ENCODE measurements at regions of chr19 and their contacts with region 1.

Region 1: GRCh38 chr19:39445265-39446111 is at the start of gene SUPT5H:
- DNase-seq: peak; percentile 91 to 99 (median 98)
- ATAC-seq: peak; percentile 94 to 96
- H3K4me3 Mint-ChIP-seq: peak within 1 kb of the TSS; percentile 92 to 100 (median 99)
- H3K27ac Mint-ChIP-seq: peak within 1 kb of the TSS; percentile 96 to 100 (median 99)
- H3K4me1 Mint-ChIP-seq: peaks cover 34 to 68% (median 56%) of the 10 kb centered on the region in 4 donors
- H3K27me3 Mint-ChIP-seq: no peaks in the 10 kb centered on the region
- polyA plus RNA-seq, gene SUPT5H: 79.9 to 115 (median 96.6) TPM

Region 2: GRCh38 chr19:39328046-39328705 is 117.3 kb before region 1 on chr19:
- POLR2A ChIA-PET with region 1: interaction called, 10 read pairs
- DNase-seq: peak; percentile 63 to 88 (median 78)
- ATAC-seq: peak; percentile 59 to 82
- H3K4me3 Mint-ChIP-seq: peak overlapping the region in 9 of 10 donors; percentile 14 to 74 (median 52)
- H3K27ac Mint-ChIP-seq: peak overlapping the region; percentile 37 to 92 (median 82)
- H3K4me1 Mint-ChIP-seq: peaks cover 23 to 63% (median 50%) of the 10 kb centered on the region in 4 donors
- H3K27me3 Mint-ChIP-seq: no peaks in the 10 kb centered on the region

Region 3: DNA sequence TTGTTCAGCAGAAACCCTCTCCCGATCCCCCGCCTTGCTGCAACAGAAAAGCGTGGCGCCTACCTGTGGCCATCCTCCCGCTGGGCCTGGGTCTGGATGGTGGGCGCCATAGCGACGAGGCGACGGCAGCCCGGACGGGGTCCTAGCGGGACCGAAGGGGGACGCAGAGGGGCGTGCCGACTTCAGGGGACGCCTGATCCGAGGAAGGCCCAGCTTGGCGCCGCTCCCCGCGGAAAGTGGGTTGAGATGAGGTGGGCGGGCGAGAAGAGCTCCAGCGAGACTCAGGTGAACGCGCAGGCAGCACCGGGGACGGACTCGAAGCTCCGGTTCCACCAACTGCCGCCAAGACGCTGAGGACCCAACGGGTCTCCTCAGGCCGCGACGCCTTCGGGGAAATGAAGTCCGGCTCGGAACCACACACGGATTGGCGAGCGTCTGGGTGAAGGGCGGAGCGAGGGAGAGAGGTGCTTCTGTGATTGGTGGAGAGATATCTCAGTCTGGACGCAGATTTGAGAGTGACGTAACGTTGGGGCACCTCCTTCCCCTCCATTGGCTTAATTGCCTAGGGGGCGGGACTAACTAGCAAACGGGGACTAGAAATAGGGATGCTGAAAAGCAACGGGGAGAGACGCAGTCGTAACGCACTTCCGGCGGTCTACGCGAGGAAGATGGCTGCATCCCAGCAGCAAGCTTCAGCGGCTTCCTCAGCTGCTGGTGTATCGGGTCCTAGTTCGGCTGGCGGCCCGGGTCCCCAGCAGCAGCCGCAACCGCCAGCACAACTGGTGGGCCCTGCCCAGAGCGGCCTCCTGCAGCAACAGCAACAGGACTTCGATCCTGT is 54.5 kb before region 1 on chr19 and contains the starts of genes MED29 and PAF1:
- POLR2A ChIA-PET with region 1: interaction called, 27 read pairs
- DNase-seq: peak; percentile 86 to 99 (median 97)
- ATAC-seq: peak; percentile 91 to 95
- H3K4me3 Mint-ChIP-seq: peak within 1 kb of the TSS; percentile 95 to 98 (median 98)
- H3K27ac Mint-ChIP-seq: peak within 1 kb of the TSS; percentile 94 to 100 (median 100)
- H3K4me1 Mint-ChIP-seq: peaks cover 15 to 58% (median 50%) of the 10 kb centered on the region in 4 donors
- H3K27me3 Mint-ChIP-seq: no peaks in the 10 kb centered on the region
- polyA plus RNA-seq, gene MED29: 48.1 to 71.4 (median 59.6) TPM
- polyA plus RNA-seq, gene PAF1: 30.7 to 53.0 (median 43.8) TPM

Region 4: DNA sequence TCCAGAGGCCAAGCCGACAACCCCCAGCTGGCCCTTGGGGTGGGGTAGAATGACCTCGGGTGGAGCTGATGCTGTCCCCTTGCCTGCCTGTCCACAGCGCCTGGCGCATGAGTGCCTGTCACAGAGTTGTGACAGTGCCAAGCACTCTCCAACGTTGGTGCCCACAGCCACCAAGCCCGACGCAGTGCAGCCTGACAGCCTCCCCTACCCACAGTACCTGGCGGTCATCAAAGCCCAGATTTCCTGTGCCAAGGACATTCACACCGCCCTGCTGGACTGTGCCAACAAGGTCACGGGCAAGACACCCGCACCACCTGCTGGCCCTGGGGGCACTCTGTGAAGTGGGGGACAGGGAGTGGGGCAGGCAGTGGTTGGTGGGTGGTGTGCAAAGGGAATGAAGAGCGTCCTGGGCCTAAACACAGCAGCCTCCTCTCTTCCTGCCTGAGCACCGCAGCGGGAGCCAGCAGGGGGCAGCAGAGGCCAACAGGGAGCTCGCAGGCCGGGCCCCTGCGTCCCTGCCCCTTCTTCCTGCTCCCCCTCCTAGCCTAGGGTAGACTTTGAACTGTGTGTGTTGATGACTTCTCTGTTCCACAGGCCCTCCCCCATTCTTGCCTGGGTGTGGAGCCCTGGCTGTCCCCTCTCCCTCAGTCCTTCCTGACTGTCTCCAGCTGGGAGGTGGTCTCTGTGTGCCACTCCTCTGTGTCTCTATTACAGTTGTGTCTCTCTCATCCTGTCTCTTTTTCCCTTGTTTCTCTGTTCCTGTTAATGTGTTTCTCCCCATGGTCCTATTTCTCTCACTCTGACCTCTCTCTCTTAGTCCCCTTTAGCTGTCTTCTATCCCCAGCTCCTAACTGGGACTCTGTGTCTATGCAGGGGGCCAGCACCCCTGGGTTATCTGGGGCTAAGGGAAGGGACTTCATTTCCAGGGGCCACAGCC is 47.9 kb before region 1 on chr19:
- POLR2A ChIA-PET with region 1: interaction called, 12 read pairs
- DNase-seq: peak; percentile 86 to 96 (median 94)
- ATAC-seq: peak; percentile 52
- H3K4me3 Mint-ChIP-seq: peak overlapping the region; percentile 40 to 84 (median 78)
- H3K27ac Mint-ChIP-seq: peak overlapping the region; percentile 90 to 99 (median 96)
- H3K4me1 Mint-ChIP-seq: peaks cover 27 to 70% (median 63%) of the 10 kb centered on the region in 4 donors
- H3K27me3 Mint-ChIP-seq: no peaks in the 10 kb centered on the region

Region 5: DNA sequence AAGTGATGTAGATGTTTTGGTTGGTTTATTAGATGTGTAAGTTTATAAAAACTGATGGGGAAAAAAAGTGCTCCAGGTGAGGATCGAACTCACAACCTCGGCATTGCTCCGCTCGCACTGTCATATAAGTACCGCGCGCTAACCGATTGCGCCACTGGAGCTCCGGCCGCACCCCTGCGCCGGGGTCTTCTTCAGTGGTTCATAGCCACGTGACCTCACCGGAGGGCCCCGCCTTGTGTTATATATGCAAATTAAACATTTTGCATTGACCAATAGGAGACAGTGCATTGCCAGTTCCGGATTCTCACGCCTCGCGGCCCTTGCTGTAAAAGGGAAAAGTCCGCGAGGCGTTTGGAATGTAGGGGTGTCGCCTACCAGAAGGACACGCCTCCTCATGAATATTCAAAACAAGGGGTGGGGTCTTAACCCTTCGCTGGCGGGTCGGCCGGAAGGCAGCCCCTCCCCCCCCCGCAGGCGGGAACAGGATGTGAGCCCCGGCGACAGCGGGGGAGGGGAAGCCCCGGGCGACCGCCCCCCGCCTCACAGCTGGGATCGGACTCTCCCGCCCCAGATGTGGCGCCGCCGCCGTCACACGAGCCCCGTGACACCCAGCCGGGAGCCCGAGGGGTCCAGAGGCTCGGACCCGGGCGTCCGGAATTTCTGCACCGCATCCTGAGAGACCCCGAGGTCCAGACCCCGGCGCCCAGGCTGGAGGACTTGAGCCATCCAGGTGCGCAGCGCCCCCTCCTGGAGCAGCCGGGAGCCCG is 33.2 kb before region 1 on chr19 and contains the start of gene PLEKHG2:
- POLR2A ChIA-PET with region 1: interaction called, 18 read pairs
- DNase-seq: peak; percentile 91 to 100 (median 98)
- ATAC-seq: peak; percentile 58 to 70
- H3K4me3 Mint-ChIP-seq: peak within 1 kb of the TSS; percentile 79 to 98 (median 89)
- H3K27ac Mint-ChIP-seq: peak within 1 kb of the TSS; percentile 93 to 100 (median 98)
- H3K4me1 Mint-ChIP-seq: peaks cover 39 to 62% (median 42%) of the 10 kb centered on the region in 4 donors
- H3K27me3 Mint-ChIP-seq: peaks cover 0 to 4% (median 0%) of the 10 kb centered on the region in 5 donors
- polyA plus RNA-seq, gene PLEKHG2: 4.2 to 5.0 (median 4.8) TPM

Measured in naive thymus-derived CD8-positive, alpha-beta T cell (primary cell).